ENCODE measurements at regions of chr7 and their contacts with region 1.

Region 1: DNA sequence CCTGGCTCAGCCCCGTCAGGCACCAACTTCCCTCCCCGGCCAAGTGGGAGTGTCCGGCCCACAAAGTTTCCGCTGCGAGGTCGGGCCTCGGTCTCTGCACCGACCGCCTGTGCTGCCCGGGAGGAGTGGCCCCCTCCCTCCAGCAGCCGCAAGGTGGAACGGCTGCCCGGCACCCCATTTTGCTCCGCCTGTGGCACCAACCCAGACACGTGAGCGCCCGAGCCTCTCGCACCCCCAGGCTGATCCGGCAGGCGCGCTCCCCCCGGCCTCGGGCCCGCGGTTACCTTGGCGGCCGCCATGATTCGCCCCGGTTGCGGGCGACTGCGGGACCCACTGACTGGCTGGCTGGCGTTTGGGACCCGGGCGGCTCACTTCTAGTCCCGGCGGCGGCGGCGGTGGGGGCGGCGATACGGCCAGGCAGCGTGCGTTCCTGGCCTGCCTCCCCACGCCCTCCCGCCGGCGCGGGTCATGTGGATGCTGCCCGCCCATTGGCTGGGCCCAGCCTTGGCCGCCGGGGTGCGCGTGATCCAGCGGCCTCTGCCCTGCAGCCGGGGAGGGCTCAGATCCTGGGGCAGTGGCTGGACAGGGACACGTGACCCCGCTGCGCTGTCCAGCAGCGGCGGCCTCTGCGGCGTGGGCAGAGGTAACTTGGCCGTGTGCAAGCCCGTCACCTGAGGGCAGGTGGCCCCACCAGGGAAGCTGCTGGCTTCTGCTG is at the start of gene SLC25A13:
- DNase-seq: peak; percentile 90
- H3K4me3 Mint-ChIP-seq: peak within 1 kb of the TSS; percentile 94
- H3K27ac Mint-ChIP-seq: peak within 1 kb of the TSS; percentile 98
- H3K4me1 Mint-ChIP-seq: peaks cover 42% of the 10 kb centered on the region
- H3K27me3 Mint-ChIP-seq: peaks cover 3% of the 10 kb centered on the region
- total RNA-seq, gene SLC25A13: 25.8 and 26.3 TPM in 2 replicates

Region 2: GRCh38 chr7:96075510-96076349 is 246.1 kb before region 1 on chr7:
- intact Hi-C with region 1: loop called (anchors 5 kb)
- DNase-seq: peak; percentile 81
- H3K4me3 Mint-ChIP-seq: peak overlapping the region; percentile 78
- H3K27ac Mint-ChIP-seq: no peak overlapping the region
- H3K4me1 Mint-ChIP-seq: peaks cover 5% of the 10 kb centered on the region
- H3K27me3 Mint-ChIP-seq: peaks cover 45% of the 10 kb centered on the region

Region 3: DNA sequence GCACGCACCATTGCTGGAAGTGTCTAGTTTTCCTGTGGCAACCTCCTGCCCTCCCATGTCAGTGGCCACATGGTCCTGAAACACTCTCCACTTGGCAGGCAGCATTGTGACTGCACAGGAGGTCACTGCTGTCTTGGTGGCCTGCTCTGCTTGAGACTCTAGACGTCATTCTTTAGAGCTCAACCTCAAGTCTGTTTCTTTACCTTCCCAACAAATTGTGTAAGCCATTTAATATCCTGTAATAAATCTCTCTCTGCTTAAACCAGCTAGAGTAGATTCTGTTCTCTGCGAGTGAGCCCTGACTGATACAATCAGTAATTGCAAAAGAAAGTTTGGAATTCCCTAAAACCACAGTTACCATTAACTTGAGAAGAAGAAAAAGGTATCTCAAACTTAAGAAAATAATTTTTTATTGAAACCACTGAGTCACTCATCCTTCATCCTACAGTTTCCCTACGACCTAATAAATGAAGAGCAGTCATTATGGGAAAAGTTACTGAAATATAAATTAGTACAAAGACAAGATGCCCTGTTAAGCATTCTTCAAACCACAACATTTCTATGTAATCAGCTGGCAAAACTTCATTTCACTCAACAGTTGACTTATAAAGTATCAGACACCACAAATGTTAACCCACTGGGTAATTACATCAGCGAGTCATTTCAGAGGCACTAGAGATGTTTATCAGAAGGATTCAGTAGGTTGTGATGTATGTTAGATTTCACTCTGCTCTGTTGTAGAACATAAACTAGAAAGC is 17.9 kb before region 1 on chr7:
- intact Hi-C with region 1: loop called (anchors 1 kb)
- DNase-seq: no peak
- H3K4me3 Mint-ChIP-seq: peak overlapping the region; percentile 58
- H3K27ac Mint-ChIP-seq: peak overlapping the region; percentile 89
- H3K4me1 Mint-ChIP-seq: peaks cover 43% of the 10 kb centered on the region
- H3K27me3 Mint-ChIP-seq: no peaks in the 10 kb centered on the region

Region 4: GRCh38 chr7:96709381-96710228 is 387.8 kb after region 1 on chr7 and contains the start of gene SEM1:
- intact Hi-C with region 1: loop called (anchors 5 kb)
- DNase-seq: peak; percentile 88
- H3K4me3 Mint-ChIP-seq: peak within 1 kb of the TSS; percentile 95
- H3K27ac Mint-ChIP-seq: peak within 1 kb of the TSS; percentile 97
- H3K4me1 Mint-ChIP-seq: peaks cover 20% of the 10 kb centered on the region
- H3K27me3 Mint-ChIP-seq: peaks cover 1% of the 10 kb centered on the region
- total RNA-seq, gene SEM1: 41.5 and 43.8 TPM in 2 replicates

Region 5: DNA sequence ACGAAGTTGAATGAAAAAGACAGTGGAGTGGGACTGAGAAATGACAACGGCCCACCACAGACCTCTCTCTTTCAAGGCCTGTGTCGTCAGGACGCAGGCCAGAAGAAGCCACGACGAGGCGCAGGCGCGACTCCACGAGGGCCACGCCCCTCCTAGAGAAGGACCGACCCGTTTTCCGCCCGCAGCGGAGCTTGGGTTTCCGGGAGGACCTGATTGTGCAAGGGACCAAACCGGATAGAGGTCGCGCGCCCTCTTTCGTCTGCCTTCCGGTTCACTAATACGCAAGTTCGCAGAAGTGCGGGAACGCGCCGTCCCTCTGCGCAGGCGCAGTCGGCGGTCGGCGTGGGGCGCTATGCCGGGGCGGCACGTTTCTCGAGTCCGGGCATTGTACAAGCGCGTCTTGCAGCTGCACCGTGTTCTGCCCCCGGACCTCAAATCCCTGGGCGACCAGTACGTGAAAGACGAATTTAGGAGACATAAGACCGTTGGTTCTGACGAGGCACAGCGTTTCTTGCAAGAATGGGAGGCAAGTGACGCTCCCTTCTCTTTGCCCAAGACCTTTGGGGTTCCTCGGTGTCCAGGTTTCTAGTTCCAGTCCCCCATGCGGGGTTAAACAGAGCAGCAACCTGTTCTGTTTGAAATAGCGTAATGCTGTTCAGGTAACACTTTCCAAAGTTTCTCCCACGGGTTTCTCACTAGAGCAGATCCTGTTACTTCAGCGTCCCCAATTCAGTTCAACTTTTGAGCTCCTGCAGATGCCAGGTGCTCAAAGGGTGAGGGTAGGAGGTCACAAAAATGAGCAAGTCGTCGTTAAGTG is 795.8 kb after region 1 on chr7 and contains the start of gene SDHAF3:
- intact Hi-C with region 1: loop called (anchors 2 kb)
- DNase-seq: peak; percentile 99
- H3K4me3 Mint-ChIP-seq: peak within 1 kb of the TSS; percentile 93
- H3K27ac Mint-ChIP-seq: peak within 1 kb of the TSS; percentile 95
- H3K4me1 Mint-ChIP-seq: peaks cover 26% of the 10 kb centered on the region
- H3K27me3 Mint-ChIP-seq: no peaks in the 10 kb centered on the region
- total RNA-seq, gene SDHAF3: 24.9 and 27.8 TPM in 2 replicates

Measured in activated CD4-positive, alpha-beta T cell treated with anti-CD3 and anti-CD28 coated beads, Interleukin-2, amount 10 ng/mL, durations not matched to agents 24 days and 14 days (primary cell).